SK-N-SH (cell line): ENCODE measurements at regions of chr6 and their contacts with region 1.

Region 1: DNA sequence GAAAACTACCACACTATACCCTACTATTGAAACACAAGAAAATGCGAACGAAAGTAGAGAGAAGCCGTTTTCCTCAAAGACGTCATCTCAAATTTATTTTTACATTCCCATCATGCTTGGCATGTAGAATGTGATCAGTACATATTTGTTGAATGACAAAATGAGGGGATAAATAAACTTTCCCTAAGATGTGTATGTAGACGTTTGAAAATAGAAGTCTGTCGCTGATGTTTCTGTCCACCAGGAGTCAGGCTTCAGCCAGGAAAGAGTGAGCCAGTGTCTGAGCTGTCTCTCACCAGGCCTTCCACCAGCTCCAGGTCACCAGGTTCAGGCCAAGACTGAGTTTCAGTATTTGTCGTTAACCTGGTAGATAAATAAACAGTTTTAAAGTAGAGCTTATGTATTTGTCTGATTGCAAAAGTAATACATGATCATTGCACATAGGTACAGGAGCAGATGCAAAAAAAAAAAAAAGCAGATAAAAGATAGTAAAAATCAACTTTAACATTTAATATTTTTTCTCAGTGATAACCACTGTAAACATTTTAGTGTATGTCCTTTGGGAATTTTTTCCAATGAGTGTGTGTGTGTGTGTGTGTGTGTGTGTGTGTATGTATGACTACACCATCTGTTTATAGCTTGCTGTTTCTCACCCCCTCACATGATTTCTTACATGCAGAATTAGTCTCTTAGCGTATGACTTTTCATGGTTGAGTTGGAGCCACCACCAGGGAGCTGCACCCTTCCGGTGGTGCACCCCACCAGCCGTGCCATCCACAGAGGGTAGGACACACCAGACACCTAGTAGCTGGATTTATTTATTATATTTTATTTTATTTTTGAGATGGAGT is 26.2 kb downstream of the WRNIP1 start:
- DNase-seq: peak; percentile 77
- H3K4me3 ChIP-seq: no peak overlapping the region
- H3K27ac ChIP-seq: peak overlapping the region; percentile 11 to 67; a peak in 3 of 4 replicates
- H3K4me1 ChIP-seq: peaks cover 4 to 9% of the 10 kb centered on the region in 2 experiments; a peak in 2 of 4 replicates
- H3K27me3 ChIP-seq: no peaks in the 10 kb centered on the region
- CTCF ChIP-seq: peak; percentile 80
- EP300 ChIP-seq: no peak
- RAD21 ChIP-seq: peak; percentile 93

Region 2: GRCh38 chr6:2841264-2842138 is 50.2 kb after region 1 on chr6 and contains the start of gene SERPINB1:
- CTCF ChIA-PET with region 1: interaction called, 31 read pairs
- POLR2A ChIA-PET with region 1: no interaction called
- DNase-seq: peak; percentile 82
- H3K4me3 ChIP-seq: peak within 1 kb of the TSS; percentile 45 to 47
- H3K27ac ChIP-seq: peak within 1 kb of the TSS; percentile 67 to 87
- H3K4me1 ChIP-seq: peaks cover 25 to 26% of the 10 kb centered on the region in 2 experiments; a peak in 3 of 4 replicates
- H3K27me3 ChIP-seq: no peaks in the 10 kb centered on the region
- CTCF ChIP-seq: no peak
- EP300 ChIP-seq: no peak
- RAD21 ChIP-seq: no peak
- polyA plus RNA-seq, gene SERPINB1: 9.4 and 10.9 TPM in 2 replicates

Region 3: GRCh38 chr6:2876210-2877056 is 85.1 kb after region 1 on chr6:
- CTCF ChIA-PET with region 1: interaction called, 14 read pairs
- POLR2A ChIA-PET with region 1: no interaction called
- DNase-seq: peak; percentile 79
- H3K4me3 ChIP-seq: peak overlapping the region in 1 of 2 experiments; percentile 47; a peak in 2 of 4 replicates
- H3K27ac ChIP-seq: no peak overlapping the region
- H3K4me1 ChIP-seq: peaks cover 0 to 7% of the 10 kb centered on the region in 2 experiments; a peak in 2 of 4 replicates
- H3K27me3 ChIP-seq: no peaks in the 10 kb centered on the region; the same call in 1 of the 2 replicates
- CTCF ChIP-seq: no peak
- EP300 ChIP-seq: no peak
- RAD21 ChIP-seq: no peak

Region 4: DNA sequence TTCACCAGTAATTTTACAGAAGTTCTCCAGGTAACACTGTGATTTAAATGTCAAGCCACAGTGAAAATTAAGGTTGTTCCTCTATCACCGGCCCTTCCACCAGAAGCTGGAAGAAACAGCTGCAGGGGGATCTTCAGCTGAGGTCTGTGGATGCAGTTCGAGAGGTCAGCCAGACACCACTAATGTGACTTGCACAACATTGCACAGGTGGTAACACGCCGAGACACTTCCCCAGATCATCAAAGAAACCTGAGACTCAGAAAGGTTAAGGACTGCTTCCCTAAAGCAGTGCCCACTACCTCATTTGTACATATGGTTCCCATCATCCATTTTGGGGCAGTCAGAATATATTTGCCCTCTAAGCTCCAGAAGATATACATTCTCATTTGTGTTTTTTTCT is 119.8 kb after region 1 on chr6:
- CTCF ChIA-PET with region 1: interaction called, 10 read pairs
- POLR2A ChIA-PET with region 1: no interaction called
- DNase-seq: no peak
- H3K4me3 ChIP-seq: no peak overlapping the region
- H3K27ac ChIP-seq: no peak overlapping the region
- H3K4me1 ChIP-seq: peaks cover 0 to 17% of the 10 kb centered on the region in 2 experiments; a peak in 1 of 4 replicates
- H3K27me3 ChIP-seq: no peaks in the 10 kb centered on the region; the same call in none of the 2 replicates
- CTCF ChIP-seq: no peak
- EP300 ChIP-seq: no peak
- RAD21 ChIP-seq: no peak